Cardiac septum (tissue), 1 donor: ENCODE measurements at regions of chr14 and their contacts with region 1.

Region 1: DNA sequence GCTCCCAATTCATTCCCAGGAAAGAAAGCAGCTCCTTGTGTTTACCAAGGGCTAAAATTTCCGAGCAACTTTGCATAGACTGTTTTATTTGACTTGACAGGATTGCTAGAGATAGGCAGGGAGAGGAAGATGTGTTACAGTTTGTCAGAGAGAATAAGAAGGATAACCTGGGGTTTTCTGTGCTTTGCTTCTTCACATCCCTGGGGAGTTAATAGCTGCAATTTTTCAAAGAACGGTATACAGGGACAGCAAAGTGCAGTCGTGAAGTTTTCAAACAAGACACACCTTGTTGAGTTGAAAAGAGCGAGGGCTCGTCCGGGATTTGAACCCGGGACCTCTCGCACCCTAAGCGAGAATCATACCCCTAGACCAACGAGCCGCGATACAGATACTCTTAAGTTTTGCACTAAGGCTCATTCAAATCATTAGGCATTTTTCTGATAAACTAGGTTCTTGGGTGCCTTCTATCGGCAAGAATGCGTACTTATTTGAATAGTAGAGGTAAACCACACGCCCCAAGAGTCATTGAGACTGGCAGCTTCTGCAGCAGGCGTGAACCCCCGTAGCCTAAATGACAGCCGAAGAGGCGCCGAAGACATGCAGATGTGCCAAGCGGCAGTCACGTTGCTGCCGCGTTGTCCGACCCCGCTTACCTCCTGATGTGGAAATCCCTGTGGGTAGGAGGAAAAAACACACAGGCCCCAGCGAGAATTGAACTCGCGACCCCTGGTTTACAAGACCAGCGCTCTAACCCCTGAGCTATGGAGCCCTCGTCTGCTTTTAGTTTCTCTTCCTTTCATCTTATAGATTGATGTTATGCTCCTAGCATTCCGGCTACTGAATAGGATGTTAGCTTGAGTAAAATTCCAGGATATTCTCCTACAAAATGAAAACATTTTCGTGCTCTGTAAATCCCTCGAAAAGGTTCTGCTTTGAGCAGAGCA is 22.2 kb upstream of the RNASE12 start:
- DNase-seq: peak; percentile 83

Region 2: DNA sequence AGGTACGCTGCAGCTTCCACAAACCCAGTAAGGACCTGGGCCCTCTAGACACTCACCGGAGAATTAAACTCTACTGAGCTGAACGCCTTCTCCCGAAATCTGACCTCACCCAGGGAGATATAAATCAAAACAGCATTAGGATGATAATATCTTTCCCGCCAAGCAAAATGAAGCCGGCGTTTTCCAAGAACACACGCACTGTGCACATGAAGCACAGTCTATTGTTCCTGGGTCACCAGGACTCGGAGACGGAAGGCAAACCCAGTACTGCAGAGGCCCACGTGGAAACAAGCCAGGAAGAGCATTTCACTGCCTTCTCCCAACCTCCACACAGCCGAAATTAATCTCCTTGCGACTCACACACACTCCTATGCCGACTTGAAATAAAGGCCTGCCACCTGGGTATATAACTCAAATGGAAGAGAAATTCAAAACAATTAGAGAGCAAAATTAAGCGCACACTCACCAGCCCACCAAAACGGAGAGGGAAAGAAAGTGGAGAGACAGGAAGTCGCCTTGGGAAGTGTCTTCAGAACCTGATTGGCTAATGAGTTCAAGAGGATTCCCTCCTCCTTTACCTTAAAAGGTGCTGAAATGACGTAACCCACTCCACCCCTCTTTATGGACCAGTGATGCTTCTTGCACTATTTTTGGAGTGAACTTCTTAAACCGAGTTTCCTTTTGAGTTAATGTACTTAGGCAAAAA is 280.4 kb before region 1 on chr14 and contains the start of gene CCNB1IP1:
- intact Hi-C with region 1: loop called (anchors 5 kb)
- DNase-seq: no peak
- total RNA-seq, gene CCNB1IP1: 61.3 TPM

Region 3: GRCh38 chr14:20413045-20413799 is 200.1 kb before region 1 on chr14 and contains the start of gene TEP1:
- intact Hi-C with region 1: loop called (anchors 2 kb)
- DNase-seq: peak; percentile 95
- total RNA-seq, gene TEP1: 15.7 TPM

Region 4: DNA sequence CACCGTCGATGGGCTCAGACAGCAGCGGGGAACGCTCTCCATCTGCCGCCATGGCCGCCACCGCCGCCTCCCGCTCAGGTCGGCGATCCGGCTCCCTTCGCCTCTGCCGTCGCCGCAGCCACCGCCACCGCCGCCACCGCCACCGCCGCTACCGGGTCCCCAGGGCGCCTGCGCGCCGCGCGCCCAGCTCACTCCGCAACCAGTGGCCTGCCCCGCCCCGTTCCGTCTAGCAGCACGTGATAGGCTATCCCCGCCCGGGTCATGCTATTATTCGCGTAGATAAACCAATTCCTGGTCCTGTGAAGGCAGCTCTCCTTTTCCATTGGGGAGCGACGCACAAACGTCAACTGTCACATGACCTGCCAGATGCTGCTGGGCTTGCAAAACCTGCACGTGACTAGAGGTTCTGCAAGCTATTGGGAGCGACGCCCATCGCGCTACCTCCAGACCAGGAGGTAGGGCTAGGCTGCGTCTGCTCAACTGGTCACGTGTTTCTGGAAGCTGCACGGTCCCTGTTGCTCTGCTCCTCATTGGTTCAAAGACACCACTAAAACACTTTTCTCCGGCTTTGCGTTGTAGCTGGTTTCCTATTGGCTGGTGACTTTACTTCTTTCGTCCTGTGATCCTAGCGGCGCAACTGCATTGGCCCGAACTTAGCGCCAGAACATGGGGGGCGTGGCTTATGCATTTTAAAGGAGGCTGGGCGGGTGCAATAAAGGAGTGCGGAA is 151.9 kb before region 1 on chr14 and contains the start of gene PIP4P1:
- intact Hi-C with region 1: loop called (anchors 5 kb)
- DNase-seq: peak; percentile 100
- total RNA-seq, gene PIP4P1: 18.2 TPM

Region 5: DNA sequence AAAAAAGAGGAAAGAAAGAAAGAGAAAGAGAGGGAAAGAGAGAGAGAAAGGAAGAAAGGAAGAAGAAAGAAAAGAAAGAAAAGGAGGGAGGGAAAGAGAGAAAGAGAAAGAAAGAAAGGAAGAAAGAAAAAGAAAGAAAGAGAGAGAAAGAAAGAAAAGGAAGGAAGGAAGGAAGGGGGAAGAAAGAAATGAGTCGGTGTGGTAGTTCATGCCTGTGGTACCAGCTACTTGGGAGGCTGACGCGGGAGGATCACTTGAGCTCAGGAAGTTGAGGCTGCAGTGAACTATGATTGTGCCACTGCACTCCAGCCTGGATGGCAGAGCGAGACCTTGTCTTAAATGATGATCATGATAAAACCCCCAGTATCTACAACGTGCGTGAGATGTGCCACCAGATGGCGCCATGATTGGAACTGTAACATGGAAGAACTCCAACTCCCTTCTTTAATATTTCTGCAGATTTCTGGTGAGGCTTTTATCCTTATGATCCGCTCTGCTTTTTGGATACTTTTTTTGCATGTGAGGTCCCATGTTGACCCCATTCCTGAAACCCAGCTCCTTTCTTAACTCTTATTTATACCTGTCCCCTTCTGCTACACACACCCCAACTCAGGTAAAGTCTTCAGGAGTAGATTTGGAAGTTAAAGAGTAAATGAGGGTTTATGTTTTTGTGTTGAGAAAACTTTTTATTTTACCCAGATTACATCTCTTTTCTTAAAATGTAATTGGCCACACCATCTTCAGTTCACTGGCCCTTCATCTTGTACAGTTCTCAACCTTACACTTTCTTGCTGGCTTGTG is 82.4 kb before region 1 on chr14:
- intact Hi-C with region 1: loop called (anchors 10 kb)
- DNase-seq: no peak